WTC11 (cell line): ENCODE measurements at regions of chr7 and their contacts with region 1.

Region 1: DNA sequence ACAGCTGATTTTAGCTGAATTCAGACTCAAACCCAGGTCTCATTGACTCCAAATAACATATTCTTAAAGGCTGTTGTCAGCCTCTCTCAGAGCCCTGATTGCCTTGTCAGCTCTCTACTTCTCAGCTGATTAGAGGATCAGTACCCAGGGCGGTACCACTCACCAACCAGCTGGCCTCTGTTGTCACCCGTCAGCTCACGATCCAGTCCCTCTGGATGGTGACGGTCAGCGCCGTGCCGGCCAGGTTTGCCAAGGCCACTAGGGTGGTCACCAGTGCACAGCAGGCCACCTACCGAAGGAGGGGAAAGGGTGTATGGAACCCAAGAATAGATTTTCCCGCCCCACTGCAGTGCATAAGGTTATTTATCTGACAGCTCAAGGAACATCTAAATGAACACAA is 52.3 kb upstream of the TOMM7 start:
- DNase-seq: no peak
- ATAC-seq: no peak
- H3K4me3 Mint-ChIP-seq: no peak overlapping the region
- H3K27ac Mint-ChIP-seq: no peak overlapping the region
- H3K4me1 Mint-ChIP-seq: peaks cover 28% of the 10 kb centered on the region
- H3K27me3 Mint-ChIP-seq: no peaks in the 10 kb centered on the region
- CTCF ChIP-seq: no peak

Region 2: GRCh38 chr7:22860784-22861482 is 14.0 kb before region 1 on chr7:
- CTCF ChIA-PET with region 1: interaction called, 15 read pairs
- POLR2A ChIA-PET with region 1: no interaction called
- DNase-seq: peak; percentile 32
- ATAC-seq: peak; percentile 16; the same call in 1 of the 2 replicates
- H3K4me3 Mint-ChIP-seq: no peak overlapping the region
- H3K27ac Mint-ChIP-seq: peak overlapping the region; percentile 85
- H3K4me1 Mint-ChIP-seq: peaks cover 55% of the 10 kb centered on the region
- H3K27me3 Mint-ChIP-seq: no peaks in the 10 kb centered on the region
- CTCF ChIP-seq: peak; percentile 60